Activated T-helper 1 cell treated with anti-CD3 and anti-CD28 coated beads, Interleukin-12 subunit alpha, Interleukin-12 subunit beta, Interleukin-2, Interleukin-4 antibody, amounts not matched to agents 30 ng/mL and 10 ng/mL and 1 ng/mL, durations not matched to agents 14 hours and 24 hours and 36 hours (primary cell): ENCODE measurements at regions of chr18 and their contacts with region 1.

Region 1: DNA sequence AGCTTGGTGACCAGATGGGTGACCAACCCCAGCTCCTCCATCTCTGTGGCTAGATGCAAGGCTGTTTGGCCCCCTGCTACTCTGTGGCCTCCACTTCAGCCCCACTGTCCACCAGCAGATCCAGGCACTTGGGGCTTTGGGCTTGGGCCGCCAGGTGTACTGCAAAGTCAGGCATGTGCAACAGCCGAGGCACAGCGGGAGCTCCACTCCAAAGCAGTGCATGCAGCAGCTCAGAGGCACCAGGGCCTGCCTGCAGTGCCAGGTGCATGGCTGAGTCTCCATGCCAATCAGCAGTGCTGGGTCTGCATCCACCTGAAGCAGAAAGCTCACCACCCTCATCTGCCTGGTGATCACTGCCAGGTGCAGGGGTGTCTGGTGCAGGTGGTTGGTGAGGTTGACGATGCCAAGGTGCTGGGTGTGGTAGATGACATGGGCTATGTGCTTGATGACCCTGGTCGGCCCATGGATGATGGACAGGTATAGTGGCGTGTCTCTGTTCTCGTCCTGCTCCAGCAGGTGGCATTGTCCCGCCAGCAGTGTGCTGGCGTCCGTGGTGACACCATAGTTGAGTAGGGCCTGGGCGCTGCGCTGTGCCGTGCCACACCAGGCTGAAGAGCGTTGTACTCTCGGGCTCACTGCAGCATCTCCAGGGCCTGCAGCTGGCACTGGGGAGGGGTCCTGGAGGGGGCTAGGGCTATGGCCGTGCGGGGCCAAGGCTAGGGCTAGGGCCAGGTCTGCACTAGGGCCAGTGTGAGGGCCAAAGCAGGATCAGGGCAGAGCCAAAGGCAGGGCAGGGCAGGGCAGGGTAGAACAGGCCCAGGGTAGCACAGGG is 1.0 kb upstream of the ANKRD62 start:
- DNase-seq: no peak
- H3K4me3 Mint-ChIP-seq: no peak overlapping the region
- H3K27ac Mint-ChIP-seq: no peak overlapping the region
- H3K4me1 Mint-ChIP-seq: no peaks in the 10 kb centered on the region
- H3K27me3 Mint-ChIP-seq: no peaks in the 10 kb centered on the region

Region 2: GRCh38 chr18:12236934-12237832 is 144.6 kb after region 1 on chr18:
- intact Hi-C with region 1: loop called (anchors 1 kb)
- DNase-seq: peak; percentile 52
- H3K4me3 Mint-ChIP-seq: no peak overlapping the region
- H3K27ac Mint-ChIP-seq: no peak overlapping the region
- H3K4me1 Mint-ChIP-seq: no peaks in the 10 kb centered on the region
- H3K27me3 Mint-ChIP-seq: peaks cover 26% of the 10 kb centered on the region